Ovary (tissue), 10 donors: ENCODE measurements at regions of chr13 and their contacts with region 1.

Region 1: GRCh38 chr13:30408319-30409101 is 13.8 kb upstream of the UBE2L5 start:
- DNase-seq: peak; percentile 96 to 98 (median 96)
- H3K4me3 ChIP-seq: peak overlapping the region; percentile 29
- H3K27ac ChIP-seq: peak overlapping the region; percentile 53 to 77
- H3K4me1 ChIP-seq: peaks cover 2% of the 10 kb centered on the region
- H3K27me3 ChIP-seq: no peaks in the 10 kb centered on the region
- CTCF ChIP-seq: peak; percentile 49 to 73 (median 57)
- EP300 ChIP-seq: no peak
- POLR2A ChIP-seq: peak; percentile 8

Region 2: GRCh38 chr13:29771247-29771646 is 637.3 kb before region 1 on chr13:
- intact Hi-C with region 1: no loop called
- DNase-seq: no peak
- H3K4me3 ChIP-seq: no peak overlapping the region
- H3K27ac ChIP-seq: no peak overlapping the region
- H3K4me1 ChIP-seq: no peaks in the 10 kb centered on the region
- H3K27me3 ChIP-seq: no peaks in the 10 kb centered on the region
- CTCF ChIP-seq: peak in 1 of 3 donors; percentile 39
- EP300 ChIP-seq: no peak
- POLR2A ChIP-seq: no peak

Region 3: GRCh38 chr13:30306762-30307193 is 101.7 kb before region 1 on chr13:
- intact Hi-C with region 1: loop called in 1 of 4 experiments (anchors 5 kb)
- DNase-seq: peak; percentile 94 to 97 (median 95)
- H3K4me3 ChIP-seq: peak overlapping the region; percentile 96
- H3K27ac ChIP-seq: peak overlapping the region; percentile 78 to 87
- H3K4me1 ChIP-seq: peaks cover 1% of the 10 kb centered on the region
- H3K27me3 ChIP-seq: no peaks in the 10 kb centered on the region
- CTCF ChIP-seq: no peak
- EP300 ChIP-seq: no peak
- POLR2A ChIP-seq: no peak

Region 4: DNA sequence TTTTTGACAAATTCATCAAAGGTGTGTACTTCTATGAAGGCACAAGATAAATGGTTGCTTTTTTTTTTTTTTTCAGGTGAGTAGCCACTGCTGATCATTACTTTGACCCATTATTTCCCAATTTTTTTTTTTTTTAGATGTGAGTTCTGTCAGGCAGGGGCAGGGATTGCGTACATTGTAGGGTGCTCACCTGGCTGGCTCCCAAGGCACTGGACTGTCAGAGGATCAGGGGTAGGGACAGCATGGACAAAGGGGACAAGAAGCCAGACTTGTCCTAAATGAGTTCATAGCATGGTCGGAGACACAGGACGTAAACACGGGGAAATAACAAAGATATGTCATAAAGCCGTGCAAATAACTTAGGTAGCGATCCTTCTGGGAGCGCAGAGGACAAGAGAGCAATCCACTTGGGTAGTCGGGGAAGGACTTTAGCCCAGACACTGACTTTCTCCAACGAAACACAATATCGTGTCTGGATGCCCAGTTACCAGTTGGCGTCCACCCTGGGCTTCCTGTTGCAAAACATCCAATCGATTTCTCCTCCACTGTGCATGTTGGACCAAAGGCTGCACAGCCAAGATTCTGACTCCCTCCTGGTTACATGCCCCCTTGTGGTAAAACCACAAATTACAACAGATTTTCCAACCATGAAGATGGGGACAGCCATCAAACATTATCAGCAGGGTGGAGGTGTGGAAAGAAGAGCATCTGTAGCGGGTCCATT is 73.7 kb before region 1 on chr13:
- intact Hi-C with region 1: loop called in 1 of 4 experiments (anchors 10 kb)
- DNase-seq: no peak
- H3K4me3 ChIP-seq: no peak overlapping the region
- H3K27ac ChIP-seq: no peak overlapping the region
- H3K4me1 ChIP-seq: peaks cover 10% of the 10 kb centered on the region
- H3K27me3 ChIP-seq: no peaks in the 10 kb centered on the region
- CTCF ChIP-seq: no peak
- EP300 ChIP-seq: no peak
- POLR2A ChIP-seq: no peak

Region 5: DNA sequence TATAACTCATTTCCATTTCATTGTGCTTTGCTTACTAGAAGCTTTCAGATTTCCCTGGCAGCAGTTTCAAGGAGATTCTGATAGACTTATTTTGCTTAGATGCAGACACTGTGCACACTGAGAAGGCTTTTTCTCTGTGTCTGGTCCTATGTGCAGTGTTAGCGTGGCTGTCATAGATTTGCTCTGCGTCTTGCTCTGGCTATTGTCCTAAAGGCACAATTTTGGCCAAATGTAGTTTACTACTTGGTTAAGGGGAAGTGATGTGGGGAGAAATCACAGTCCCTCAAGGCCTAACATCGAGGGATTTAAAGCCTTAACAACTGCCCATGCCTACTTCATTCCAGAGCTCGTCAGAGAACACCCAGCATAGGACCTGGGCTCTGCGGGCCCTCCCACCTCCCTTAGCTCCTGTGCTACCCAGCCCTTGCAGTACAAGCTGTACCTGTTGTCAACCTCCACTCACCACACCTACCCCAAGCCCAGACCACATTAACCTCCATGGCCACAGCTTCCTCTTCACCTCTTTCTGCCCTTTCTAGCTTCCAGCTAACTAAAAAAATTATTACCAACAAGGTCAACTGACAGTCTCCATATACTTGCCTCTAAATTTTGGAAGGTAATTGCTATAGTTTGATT is 62.2 kb before region 1 on chr13:
- intact Hi-C with region 1: no loop called
- DNase-seq: no peak
- H3K4me3 ChIP-seq: no peak overlapping the region
- H3K27ac ChIP-seq: no peak overlapping the region
- H3K4me1 ChIP-seq: peaks cover 3% of the 10 kb centered on the region
- H3K27me3 ChIP-seq: no peaks in the 10 kb centered on the region
- CTCF ChIP-seq: no peak
- EP300 ChIP-seq: no peak
- POLR2A ChIP-seq: no peak

Region 6: GRCh38 chr13:30465585-30466357 is 57.3 kb after region 1 on chr13 and contains the start of gene HMGB1:
- intact Hi-C with region 1: loop called in 2 of 4 experiments (anchors 2 to 10 kb)
- DNase-seq: peak; percentile 97 to 98 (median 97)
- H3K4me3 ChIP-seq: peak within 1 kb of the TSS; percentile 93
- H3K27ac ChIP-seq: peak within 1 kb of the TSS; percentile 99 to 100
- H3K4me1 ChIP-seq: peaks cover 1% of the 10 kb centered on the region
- H3K27me3 ChIP-seq: no peaks in the 10 kb centered on the region
- CTCF ChIP-seq: no peak
- EP300 ChIP-seq: no peak
- POLR2A ChIP-seq: peak; percentile 98
- total RNA-seq, gene HMGB1: 163 to 283 (median 240) TPM

Region 7: DNA sequence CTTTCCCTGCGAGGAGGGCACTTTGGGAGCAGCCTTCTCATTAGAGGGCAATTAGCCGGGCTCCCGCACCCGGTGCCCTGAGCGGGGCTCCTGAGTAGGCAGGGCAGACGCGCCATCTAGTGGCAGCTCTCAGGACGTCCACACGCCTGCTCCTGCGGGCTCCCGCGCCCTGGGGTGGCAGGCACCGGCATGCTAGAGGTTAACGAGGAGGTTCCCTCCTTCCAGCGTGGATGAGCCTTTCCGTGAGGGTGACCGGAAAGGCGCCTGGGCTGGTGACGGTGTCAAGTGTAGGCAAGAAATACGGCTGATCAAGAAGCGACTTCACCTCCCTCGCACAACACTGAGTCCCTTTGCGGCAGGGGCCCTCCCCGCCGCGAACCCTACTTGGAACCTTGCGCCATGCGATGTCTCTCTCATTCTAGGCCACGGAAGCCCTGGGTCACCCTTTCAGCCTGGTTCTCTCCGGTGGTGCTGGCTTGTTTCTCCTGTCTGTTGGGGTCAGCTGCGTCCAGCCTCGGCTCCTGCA is 394.5 kb after region 1 on chr13:
- intact Hi-C with region 1: loop called in 1 of 4 experiments (anchors 10 kb)
- DNase-seq: peak; percentile 84 to 91 (median 86)
- H3K4me3 ChIP-seq: peak overlapping the region; percentile 35
- H3K27ac ChIP-seq: no peak overlapping the region
- H3K4me1 ChIP-seq: peaks cover 4% of the 10 kb centered on the region
- H3K27me3 ChIP-seq: no peaks in the 10 kb centered on the region
- CTCF ChIP-seq: peak; percentile 84 to 92 (median 86)
- EP300 ChIP-seq: no peak
- POLR2A ChIP-seq: no peak